Adrenal gland (tissue), 19 donors: ENCODE measurements at regions of chr5 and their contacts with region 1.

Region 1: DNA sequence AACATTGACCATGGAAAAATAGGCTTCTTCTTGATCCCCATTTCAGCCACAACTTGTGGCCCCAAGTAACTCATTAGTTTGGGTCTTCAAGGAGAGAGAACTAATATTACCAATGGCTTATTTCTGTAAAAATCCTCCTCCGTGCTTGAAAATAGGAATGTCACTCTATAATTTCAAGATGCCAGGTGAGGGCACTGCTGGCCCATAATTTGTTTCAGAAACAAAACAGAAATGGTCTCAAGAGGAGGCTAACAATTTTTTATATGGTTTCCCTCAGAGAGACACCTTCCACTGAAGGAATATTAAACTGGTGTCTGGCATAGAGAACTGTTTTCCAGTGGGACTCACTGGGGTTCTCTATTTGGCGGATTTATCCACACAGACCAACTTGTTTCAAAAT is 437.0 kb upstream of the TRPC7 start:
- DNase-seq: peak in 5 of 7 donors; percentile 26 to 71 (median 44)
- H3K4me3 ChIP-seq: no peak overlapping the region
- H3K27ac ChIP-seq: no peak overlapping the region
- H3K4me1 ChIP-seq: peaks cover 0 to 14% of the 10 kb centered on the region in 2 donors
- H3K27me3 ChIP-seq: no peaks in the 10 kb centered on the region
- CTCF ChIP-seq: peak in 5 of 6 experiments; percentile 50 to 68 (median 55)
- POLR2A ChIP-seq: no peak

Region 2: GRCh38 chr5:136374003-136374402 is 428.4 kb before region 1 on chr5:
- intact Hi-C with region 1: no loop called
- DNase-seq: peak in 1 of 7 donors; percentile 8
- H3K4me3 ChIP-seq: no peak overlapping the region
- H3K27ac ChIP-seq: no peak overlapping the region
- H3K4me1 ChIP-seq: no peaks in the 10 kb centered on the region
- H3K27me3 ChIP-seq: no peaks in the 10 kb centered on the region
- CTCF ChIP-seq: peak in 4 of 6 experiments; percentile 18 to 36 (median 24)
- POLR2A ChIP-seq: no peak

Region 3: DNA sequence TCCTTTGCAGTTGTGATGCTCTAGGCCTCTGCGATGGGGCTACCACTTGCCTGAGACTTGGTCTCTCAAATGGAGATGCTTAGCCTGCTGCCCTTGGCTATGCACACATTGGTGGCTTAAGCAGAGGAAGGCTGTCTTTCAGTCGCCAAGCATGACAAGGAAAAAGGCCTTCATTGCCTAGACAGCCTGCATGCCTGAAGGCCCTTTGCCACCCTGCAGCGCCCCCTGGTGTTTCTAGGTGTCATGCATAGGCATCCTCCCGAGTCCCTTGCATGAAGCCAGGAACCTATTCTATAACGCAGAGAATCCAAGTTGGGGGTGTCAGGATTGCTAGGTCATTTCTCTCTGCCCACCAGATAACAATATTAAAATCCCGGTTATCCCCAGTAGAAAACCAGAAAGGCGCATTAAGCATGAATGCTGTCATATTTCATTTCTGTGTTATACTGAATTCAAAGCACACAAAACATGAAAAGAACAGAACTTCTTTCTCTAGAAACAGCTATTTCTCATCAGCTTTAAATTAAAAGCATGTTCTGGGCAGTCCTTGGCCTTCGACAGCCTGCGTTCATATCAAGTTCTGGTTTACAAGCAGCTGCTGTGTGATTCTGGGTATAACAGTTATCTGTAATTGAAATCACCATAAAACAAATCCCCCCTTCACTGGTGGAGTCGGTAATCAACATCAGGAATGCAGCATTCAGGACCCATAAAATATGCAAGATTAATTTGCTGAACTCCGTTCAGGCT is 377.4 kb before region 1 on chr5:
- intact Hi-C with region 1: no loop called
- DNase-seq: peak; percentile 77 to 91 (median 85)
- H3K4me3 ChIP-seq: no peak overlapping the region
- H3K27ac ChIP-seq: no peak overlapping the region
- H3K4me1 ChIP-seq: no peaks in the 10 kb centered on the region
- H3K27me3 ChIP-seq: no peaks in the 10 kb centered on the region
- CTCF ChIP-seq: peak; percentile 48 to 75 (median 68)
- POLR2A ChIP-seq: no peak

Region 4: DNA sequence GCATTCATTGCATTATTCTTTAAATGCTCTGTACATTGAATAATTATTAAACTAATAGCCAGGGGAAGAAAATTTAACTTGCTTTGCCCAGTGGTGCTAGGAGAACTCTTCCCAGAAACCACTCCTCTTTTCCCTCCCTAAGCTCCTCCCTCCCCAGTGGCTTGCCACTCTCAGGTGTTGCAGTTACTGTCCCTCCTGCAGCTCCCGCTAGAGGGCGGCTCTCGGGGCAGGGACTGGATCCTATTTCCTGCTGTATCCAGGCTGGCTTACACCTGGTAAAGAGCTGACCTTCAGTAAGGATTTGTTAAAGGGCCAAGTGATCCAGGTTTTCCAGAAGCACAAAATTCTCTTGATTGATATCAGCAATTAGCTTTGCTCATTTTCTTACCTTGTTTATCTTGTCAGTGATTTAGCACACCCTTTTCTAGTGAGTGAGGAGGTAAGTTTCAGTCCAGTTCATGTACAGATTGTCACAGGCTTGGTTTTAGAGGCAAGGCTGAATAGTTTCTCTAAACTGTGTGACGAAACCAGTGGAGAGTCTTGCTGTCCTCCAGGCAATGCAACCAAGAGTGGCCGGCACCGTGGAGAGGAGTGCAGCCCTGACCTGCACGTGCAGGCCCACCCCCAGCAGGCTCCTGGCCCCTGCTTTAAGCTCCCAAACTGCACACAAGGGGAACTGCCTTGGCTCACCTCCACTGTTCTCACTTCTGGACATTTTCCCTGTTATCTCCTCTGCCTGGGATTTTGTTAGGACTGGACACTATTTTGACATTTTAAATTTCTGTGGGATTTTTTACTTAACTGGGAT is 273.0 kb after region 1 on chr5:
- intact Hi-C with region 1: loop called in 1 of 2 experiments (anchors 10 kb)
- DNase-seq: peak; percentile 79 to 94 (median 91)
- H3K4me3 ChIP-seq: no peak overlapping the region
- H3K27ac ChIP-seq: peak overlapping the region in 4 of 5 donors; percentile 13 to 77 (median 45)
- H3K4me1 ChIP-seq: peaks cover 15 to 43% of the 10 kb centered on the region in 2 donors
- H3K27me3 ChIP-seq: no peaks in the 10 kb centered on the region
- CTCF ChIP-seq: peak; percentile 60 to 83 (median 73)
- POLR2A ChIP-seq: no peak

Region 5: GRCh38 chr5:137220523-137220927 is 418.1 kb after region 1 on chr5:
- intact Hi-C with region 1: loop called in 1 of 2 experiments (anchors 10 kb)
- DNase-seq: peak; percentile 35 to 75 (median 66)
- H3K4me3 ChIP-seq: no peak overlapping the region
- H3K27ac ChIP-seq: peak overlapping the region in 1 of 5 donors; percentile 1
- H3K4me1 ChIP-seq: peaks cover 0 to 7% of the 10 kb centered on the region in 2 donors
- H3K27me3 ChIP-seq: no peaks in the 10 kb centered on the region
- CTCF ChIP-seq: peak; percentile 24 to 79 (median 74)
- POLR2A ChIP-seq: no peak

Region 6: DNA sequence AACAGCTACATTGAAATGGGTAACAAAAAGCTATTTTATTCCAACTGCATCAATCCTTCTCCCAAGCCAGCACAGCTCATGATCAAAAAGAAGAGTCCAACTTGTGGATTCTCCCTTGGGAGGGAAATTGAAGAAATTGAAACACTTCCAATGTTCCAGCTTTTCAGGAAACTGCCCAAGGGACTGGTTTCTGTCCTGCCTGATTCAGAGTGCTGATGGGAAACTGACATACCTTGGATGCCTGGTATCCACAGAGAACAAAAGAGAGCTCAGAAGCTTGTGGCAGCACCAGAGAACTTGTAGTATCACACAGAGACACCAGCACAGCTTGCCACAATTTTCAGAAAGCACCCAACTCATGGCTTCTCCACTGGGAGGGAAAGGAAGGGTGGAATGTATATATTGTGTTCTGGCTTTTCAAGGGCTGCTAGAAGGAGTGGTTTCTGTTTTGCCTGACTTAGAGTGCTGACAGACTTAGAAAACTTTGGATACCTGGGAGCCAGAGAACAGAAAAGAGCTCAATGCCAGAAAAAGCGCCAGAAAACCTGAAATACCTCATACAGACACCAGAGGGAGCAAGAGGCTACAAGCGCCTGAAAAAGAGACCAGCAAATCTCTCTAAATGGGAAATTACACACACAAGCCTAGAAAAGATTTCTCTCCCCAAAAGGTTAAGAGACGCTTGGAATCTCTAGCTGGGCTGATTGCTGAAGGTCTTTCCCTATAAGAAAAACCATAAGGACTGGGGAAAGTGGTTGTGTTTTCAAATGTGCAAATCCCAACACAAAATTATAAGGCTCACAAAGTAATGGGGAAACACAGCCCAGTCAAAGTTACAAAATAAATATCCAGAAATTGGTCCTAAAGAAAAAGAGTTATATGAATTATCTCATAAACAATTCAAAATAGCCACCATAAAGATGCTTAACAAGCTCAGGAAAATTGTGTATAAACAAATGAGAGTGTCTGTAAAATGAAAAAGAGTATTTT is 518.0 kb after region 1 on chr5:
- intact Hi-C with region 1: loop called in 1 of 2 experiments (anchors 10 kb)
- DNase-seq: peak in 6 of 7 donors; percentile 31 to 81 (median 50)
- H3K4me3 ChIP-seq: no peak overlapping the region
- H3K27ac ChIP-seq: no peak overlapping the region
- H3K4me1 ChIP-seq: peaks cover 5 to 13% of the 10 kb centered on the region in 2 donors
- H3K27me3 ChIP-seq: no peaks in the 10 kb centered on the region
- CTCF ChIP-seq: peak; percentile 75 to 85 (median 80)
- POLR2A ChIP-seq: no peak

Region 7: DNA sequence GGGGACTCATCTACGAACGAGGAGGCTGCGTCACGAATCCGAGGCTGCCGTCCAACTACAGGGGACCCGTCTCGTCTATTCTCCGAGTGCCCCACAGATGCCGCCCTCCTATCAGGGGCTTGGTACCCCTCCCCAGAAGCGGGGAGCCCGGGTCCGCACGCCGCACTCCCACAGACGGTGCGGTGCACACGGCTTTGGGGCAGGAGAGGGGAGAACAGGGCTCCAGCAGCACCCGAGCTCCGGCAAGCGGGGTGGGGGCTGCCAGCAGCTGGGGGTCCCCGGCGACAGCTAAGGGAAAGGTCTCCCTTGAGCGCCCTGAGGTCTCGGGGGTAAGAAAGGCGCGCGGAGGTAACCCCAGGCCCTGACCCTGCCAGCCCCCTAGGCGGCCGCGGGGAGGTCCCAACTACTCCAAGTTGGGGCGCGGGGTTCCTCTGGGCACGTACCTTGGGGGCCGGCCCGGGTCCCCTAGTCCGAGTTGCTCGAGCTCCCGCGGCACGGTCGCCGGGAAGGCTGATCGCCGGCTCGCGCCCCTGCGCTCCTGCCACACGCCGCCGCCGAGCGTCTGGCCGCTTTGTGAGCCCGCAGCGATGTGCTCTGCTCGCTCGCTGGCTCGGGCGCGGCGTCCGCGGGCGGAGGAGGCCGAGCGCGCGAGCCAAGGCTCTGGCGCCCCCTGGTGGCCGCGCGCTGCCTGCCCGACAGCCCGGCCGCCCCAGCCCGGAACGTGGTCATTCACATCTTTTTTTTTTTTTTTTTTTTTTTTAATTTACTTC is 696.5 kb after region 1 on chr5 and contains the start of gene SPOCK1:
- intact Hi-C with region 1: loop called in 1 of 2 experiments (anchors 5 kb)
- DNase-seq: peak; percentile 56 to 86 (median 74)
- H3K4me3 ChIP-seq: peak within 1 kb of the TSS in 2 of 4 donors; percentile 43 to 65
- H3K27ac ChIP-seq: peak within 1 kb of the TSS in 1 of 5 donors; percentile 43
- H3K4me1 ChIP-seq: peaks cover 5 to 6% of the 10 kb centered on the region in 2 donors
- H3K27me3 ChIP-seq: peaks cover 4% of the 10 kb centered on the region
- CTCF ChIP-seq: peak; percentile 10 to 97 (median 56)
- POLR2A ChIP-seq: peak in 1 of 2 donors; percentile 61
- total RNA-seq, gene SPOCK1: 5.4 to 102 (median 62.1) TPM